Left cardiac atrium (tissue), 4 donors: ENCODE measurements at regions of chr1 and their contacts with region 1.

Region 1: GRCh38 chr1:231806623-231807495 is 180.3 kb downstream of the DISC1 start:
- DNase-seq: peak; percentile 46
- ATAC-seq: peak; percentile 74 to 82

Region 2: GRCh38 chr1:231493421-231494185 is 313.3 kb before region 1 on chr1:
- intact Hi-C with region 1: no loop called
- DNase-seq: no peak
- ATAC-seq: peak in 1 of 2 donors; percentile 70

Region 3: DNA sequence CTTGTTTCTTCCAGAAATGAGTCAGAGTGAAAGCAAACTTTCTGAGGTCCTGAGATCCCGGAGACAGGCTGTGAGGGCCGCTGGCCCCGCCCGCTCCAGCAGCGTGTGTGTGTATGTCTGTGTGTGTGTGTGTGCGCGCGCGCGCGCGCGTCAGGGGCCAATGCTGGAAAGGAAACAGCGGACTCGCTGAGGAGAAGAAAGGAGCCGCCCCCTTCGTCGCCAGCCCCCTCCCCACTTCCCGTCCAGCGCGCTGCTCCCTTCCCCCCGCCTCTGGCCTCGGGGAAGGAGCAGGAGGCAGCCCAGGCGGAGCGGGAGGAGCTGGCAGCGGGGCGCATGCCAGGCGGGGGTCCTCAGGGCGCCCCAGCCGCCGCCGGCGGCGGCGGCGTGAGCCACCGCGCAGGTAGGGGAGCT is 180.3 kb before region 1 on chr1 and contains the start of gene DISC1:
- intact Hi-C with region 1: loop called in 1 of 2 experiments (anchors 10 kb)
- DNase-seq: peak; percentile 91
- ATAC-seq: peak; percentile 90 to 95
- total RNA-seq, gene DISC1: 5.0 to 5.4 TPM